Activated CD4-positive, alpha-beta T cell treated with anti-CD3 and anti-CD28 coated beads, Interleukin-2, amount 10 ng/mL, durations not matched to agents 24 days and 14 days (primary cell): ENCODE measurements at regions of chr14 and their contacts with region 1.

Region 1: DNA sequence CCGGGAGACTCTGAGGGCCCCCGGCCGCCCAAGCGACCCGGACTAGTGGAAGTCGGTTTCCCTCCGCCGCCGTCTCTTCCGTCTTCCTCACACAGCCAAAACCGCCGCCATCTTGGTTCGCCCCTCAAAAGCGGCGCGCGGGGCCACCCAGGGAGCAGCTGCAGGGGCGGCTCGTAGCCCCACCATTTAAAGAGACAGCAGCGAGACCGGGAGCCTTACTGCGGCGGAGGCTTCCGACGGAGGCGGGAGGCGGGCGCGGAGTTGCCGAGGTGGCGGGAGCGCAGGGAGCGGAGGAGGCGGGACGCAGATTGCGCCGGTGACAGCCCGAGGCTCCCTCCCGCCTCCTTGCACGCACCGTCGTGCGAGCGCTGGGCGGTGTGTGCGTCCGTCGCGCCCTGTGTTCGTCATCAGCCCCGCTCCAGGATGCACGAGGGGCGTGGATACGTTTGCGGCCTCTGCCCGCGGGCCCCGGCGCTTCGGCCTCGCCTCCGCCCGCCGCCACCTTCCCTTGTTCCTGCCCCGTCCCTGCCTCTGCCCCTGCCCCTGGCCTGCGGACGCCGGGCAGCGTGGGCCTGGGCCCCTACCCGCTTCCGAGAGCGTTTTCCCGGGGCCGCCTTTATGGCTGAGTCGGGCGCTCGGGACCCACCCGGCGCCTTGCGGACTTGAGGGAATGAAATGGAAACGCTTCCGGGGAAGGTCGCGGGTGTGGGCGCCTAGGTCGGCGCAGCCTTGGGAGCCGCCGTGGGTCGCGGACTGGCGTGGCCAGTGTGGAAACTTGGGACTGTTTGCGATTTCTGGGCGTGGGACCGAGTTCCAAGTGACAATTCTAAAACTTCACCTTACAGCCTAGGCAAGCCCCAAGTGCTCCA is at the start of gene PPP4R3A:
- DNase-seq: peak; percentile 97
- H3K4me3 Mint-ChIP-seq: peak within 1 kb of the TSS; percentile 97
- H3K27ac Mint-ChIP-seq: peak within 1 kb of the TSS; percentile 100
- H3K4me1 Mint-ChIP-seq: peaks cover 18% of the 10 kb centered on the region
- H3K27me3 Mint-ChIP-seq: peaks cover 3% of the 10 kb centered on the region
- total RNA-seq, gene PPP4R3A: 119 and 138 TPM in 2 replicates

Region 2: GRCh38 chr14:90383075-90383730 is 1127.2 kb before region 1 on chr14:
- intact Hi-C with region 1: loop called (anchors 5 kb)
- DNase-seq: peak; percentile 99
- H3K4me3 Mint-ChIP-seq: no peak overlapping the region
- H3K27ac Mint-ChIP-seq: no peak overlapping the region
- H3K4me1 Mint-ChIP-seq: peaks cover 6% of the 10 kb centered on the region
- H3K27me3 Mint-ChIP-seq: no peaks in the 10 kb centered on the region

Region 3: DNA sequence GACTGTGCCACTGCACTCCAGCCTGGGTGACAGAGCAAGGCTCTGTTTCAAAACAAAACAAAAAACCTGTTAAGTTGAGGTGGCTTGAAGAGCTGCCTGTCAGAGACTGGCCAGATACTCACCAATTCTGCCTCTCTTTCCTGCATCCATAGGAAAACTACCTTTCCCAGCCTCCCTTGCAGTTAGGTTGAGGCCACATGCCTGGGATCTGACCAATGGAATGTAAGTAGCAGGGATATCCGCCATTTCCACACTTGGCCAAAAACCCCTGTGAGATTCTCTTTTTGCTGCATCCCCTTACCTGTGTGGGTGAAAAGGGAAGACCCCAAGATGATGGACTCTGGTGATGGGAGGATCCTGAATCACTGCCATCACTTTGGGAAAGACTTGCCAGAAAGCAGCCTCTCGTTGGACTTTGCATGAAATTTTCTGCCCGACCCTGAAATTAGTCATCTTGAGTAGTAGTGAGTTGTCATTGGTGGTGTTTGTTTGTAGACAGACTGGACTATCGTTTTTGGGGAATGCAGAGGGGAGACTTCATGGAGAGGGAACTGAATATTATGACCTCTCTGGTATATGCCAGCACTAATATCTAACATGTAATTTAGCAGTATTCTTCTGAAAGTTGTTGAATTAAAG is 279.9 kb before region 1 on chr14:
- intact Hi-C with region 1: no loop called
- DNase-seq: peak; percentile 75
- H3K4me3 Mint-ChIP-seq: peak overlapping the region; percentile 78
- H3K27ac Mint-ChIP-seq: peak overlapping the region; percentile 99
- H3K4me1 Mint-ChIP-seq: peaks cover 71% of the 10 kb centered on the region
- H3K27me3 Mint-ChIP-seq: no peaks in the 10 kb centered on the region

Region 4: DNA sequence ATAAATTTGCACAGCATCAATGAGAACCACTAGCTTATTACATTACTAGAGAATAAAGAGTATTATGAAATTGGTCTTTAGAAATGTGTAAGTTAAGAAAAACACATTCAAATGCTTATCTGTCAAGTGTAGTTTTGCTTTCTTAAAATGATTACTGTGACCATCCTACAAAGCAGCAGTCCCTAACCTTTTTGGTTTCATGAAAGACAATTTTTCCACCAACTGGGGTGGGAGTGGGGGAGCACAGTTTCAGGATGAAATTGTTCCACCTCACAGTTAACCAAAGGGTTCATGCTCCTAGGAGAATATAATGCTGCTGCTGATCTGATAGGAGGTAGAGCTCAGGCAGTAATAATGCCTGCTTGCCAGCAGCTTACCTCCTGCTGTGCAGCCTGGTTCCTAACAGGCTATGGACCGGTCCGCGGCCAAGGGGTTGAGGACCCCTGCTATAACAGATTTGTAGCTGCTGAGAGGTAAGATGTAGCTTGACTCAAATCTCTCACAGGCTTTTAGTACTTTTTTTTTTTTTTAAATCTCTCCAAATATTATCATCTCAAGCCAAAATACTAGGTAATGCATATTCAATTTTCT is 45.7 kb before region 1 on chr14:
- intact Hi-C with region 1: loop called (anchors 2 kb)
- DNase-seq: no peak
- H3K4me3 Mint-ChIP-seq: no peak overlapping the region
- H3K27ac Mint-ChIP-seq: peak overlapping the region; percentile 76
- H3K4me1 Mint-ChIP-seq: peaks cover 17% of the 10 kb centered on the region
- H3K27me3 Mint-ChIP-seq: no peaks in the 10 kb centered on the region

Region 5: DNA sequence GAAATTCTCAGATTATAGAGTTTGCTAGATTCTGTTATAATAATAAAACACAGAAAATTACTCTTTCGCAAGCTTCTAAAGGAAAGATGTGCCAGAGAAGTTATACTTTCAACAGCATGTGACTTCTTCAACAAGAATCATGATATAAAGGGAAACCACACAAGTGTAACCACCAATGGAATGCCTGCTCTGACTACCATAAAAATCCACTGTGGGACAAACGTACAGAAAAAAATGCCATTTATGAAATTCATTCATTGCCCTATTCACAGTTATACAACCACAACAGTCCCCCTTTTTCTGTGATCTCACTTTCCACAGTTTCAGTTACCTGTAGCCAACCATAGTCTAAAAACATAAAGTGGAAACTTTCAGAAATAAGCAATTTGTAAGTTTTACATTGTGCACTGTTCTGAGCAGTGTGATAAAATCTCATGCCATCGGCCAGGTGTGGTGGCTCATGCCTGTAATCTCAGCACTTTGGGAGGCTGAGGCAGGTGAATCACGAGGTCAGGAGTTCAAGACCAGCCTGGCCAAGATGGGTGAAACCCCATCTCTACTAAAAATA is 218.3 kb after region 1 on chr14:
- intact Hi-C with region 1: no loop called
- DNase-seq: no peak
- H3K4me3 Mint-ChIP-seq: no peak overlapping the region
- H3K27ac Mint-ChIP-seq: no peak overlapping the region
- H3K4me1 Mint-ChIP-seq: peaks cover 10% of the 10 kb centered on the region
- H3K27me3 Mint-ChIP-seq: no peaks in the 10 kb centered on the region

Region 6: DNA sequence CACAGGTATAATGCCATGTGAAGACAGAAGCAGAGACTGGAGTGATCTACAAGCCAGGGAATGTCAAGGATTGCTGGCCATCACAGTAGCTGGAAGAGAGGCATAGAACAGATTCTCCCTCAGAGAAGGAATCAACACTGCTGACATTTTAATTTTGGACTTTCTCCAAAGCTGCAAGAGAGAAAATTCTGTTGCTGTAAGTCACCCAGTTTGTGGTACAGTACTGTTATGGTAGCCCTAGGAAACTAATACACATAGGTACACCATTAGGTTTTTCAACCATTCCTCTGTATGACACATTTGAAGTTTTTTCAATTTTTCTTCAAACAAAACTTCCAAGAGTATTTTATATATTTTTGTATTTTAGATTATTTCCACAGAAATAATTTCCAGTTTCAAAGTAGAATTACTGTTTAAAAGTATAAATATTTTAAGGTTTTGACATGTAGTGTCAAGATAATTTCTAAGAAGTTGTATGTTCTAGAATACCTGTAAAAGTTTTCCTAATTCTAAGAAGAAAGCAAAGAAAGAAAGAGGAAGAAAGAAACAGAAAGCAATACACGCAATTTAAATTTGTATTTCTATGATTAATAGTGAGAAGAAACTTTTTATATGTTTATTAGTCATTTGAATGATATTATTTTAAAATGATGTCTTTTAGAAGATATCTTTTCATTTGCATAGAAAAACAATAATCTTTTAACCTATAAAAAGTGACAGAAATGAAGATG is 286.4 kb after region 1 on chr14:
- intact Hi-C with region 1: no loop called
- DNase-seq: no peak
- H3K4me3 Mint-ChIP-seq: no peak overlapping the region
- H3K27ac Mint-ChIP-seq: peak overlapping the region; percentile 41
- H3K4me1 Mint-ChIP-seq: no peaks in the 10 kb centered on the region
- H3K27me3 Mint-ChIP-seq: no peaks in the 10 kb centered on the region

Region 7: DNA sequence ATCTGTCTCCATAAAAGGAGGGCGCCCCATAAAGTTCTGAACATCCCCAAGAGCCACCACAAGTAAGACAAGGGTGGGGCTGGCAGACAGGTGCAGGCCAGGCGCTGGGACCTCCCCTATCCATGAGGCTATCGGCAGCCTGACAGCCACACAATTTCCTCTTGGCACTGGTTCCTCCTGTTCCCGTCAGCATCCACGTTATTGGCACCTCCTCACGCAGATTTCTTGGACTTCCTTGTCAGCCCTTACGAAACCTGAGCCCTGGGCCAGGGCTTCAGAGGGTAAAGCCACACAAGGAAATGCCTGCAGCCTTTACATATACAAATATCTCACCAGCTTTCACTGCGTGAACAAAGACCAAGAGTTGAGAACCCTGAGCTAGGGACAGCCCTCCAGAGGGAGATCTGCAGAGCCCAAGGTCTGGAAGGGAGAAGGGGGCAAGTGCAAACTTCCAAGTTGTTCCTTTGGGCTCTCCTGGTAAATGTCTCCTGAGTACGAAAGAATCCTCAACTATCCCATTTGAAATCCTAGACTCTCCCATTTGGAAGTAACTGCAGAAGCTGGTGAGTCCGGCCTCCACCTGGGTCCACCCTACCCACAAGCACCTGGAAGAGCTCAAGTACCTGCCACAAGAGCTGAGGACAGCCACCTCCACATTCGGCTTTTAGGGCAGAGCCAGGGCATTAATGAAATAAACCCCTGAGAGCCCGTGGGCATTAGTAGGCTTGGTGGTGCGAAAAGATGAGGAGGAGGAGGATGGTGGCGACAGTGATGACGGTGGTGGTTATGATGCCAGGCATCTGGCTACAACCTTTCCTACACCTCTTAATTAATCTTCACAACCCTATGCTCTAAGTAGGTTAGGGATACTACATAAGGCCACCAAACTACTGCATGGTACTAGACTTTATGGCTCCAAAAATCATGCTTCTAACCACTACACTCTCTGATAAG is 362.4 kb after region 1 on chr14:
- intact Hi-C with region 1: loop called (anchors 2 kb)
- DNase-seq: peak; percentile 82
- H3K4me3 Mint-ChIP-seq: peak overlapping the region; percentile 89
- H3K27ac Mint-ChIP-seq: peak overlapping the region; percentile 91
- H3K4me1 Mint-ChIP-seq: peaks cover 90% of the 10 kb centered on the region
- H3K27me3 Mint-ChIP-seq: no peaks in the 10 kb centered on the region

Region 8: GRCh38 chr14:92121670-92122350 is 611.4 kb after region 1 on chr14 and contains the starts of genes CPSF2 and NDUFB1:
- intact Hi-C with region 1: loop called (anchors 2 kb)
- DNase-seq: peak; percentile 96
- H3K4me3 Mint-ChIP-seq: peak within 1 kb of the TSS; percentile 98
- H3K27ac Mint-ChIP-seq: peak within 1 kb of the TSS; percentile 100
- H3K4me1 Mint-ChIP-seq: peaks cover 31% of the 10 kb centered on the region
- H3K27me3 Mint-ChIP-seq: no peaks in the 10 kb centered on the region
- total RNA-seq, gene CPSF2: 111 and 120 TPM in 2 replicates
- total RNA-seq, gene NDUFB1: 76.1 and 77.9 TPM in 2 replicates